Activated CD8-positive, alpha-beta T cell treated with anti-CD3 and anti-CD28 coated beads for 36 hours (primary cell): ENCODE measurements at regions of chr22 and their contacts with region 1.

Region 1: DNA sequence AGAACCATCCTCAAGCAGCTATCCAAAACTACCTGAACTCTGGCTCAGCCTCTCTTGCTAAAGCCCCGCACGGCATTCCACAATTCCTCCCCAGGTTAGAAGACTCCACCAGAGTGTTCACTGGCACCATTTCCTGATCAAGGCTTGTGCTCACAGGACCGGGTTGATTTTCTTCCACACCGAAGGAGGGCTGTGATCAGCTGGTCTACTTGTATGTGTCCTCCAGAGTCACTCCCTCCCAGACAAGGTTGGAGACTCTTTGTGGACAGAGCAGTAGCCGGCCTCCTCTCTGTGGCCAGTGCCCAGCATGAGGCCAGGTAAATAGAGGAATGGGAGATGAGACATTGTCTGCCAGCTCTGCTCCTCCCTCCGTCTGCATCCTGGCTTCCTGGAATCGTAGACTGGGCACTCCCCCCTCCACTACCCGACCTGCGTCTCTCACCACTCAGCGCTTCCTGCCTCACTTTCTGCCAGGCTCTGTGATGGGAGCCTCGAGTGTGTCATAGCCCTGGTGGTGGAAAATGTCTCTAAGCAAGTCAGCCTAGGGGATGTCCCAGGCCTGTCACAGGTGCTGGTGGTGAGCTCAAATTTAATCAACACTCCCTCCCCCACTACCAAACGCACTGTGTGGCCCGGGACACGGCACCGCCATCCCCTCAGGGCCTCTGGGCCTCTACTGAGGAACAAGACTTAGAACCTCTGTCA is 12.5 kb upstream of the TMPRSS6 start:
- DNase-seq: peak; percentile 97
- ATAC-seq: peak; percentile 93
- H3K4me3 Mint-ChIP-seq: peak overlapping the region; percentile 87
- H3K27ac Mint-ChIP-seq: peak overlapping the region; percentile 100
- H3K4me1 Mint-ChIP-seq: peaks cover 86% of the 10 kb centered on the region
- H3K27me3 Mint-ChIP-seq: no peaks in the 10 kb centered on the region
- CTCF ChIP-seq: no peak

Region 2: DNA sequence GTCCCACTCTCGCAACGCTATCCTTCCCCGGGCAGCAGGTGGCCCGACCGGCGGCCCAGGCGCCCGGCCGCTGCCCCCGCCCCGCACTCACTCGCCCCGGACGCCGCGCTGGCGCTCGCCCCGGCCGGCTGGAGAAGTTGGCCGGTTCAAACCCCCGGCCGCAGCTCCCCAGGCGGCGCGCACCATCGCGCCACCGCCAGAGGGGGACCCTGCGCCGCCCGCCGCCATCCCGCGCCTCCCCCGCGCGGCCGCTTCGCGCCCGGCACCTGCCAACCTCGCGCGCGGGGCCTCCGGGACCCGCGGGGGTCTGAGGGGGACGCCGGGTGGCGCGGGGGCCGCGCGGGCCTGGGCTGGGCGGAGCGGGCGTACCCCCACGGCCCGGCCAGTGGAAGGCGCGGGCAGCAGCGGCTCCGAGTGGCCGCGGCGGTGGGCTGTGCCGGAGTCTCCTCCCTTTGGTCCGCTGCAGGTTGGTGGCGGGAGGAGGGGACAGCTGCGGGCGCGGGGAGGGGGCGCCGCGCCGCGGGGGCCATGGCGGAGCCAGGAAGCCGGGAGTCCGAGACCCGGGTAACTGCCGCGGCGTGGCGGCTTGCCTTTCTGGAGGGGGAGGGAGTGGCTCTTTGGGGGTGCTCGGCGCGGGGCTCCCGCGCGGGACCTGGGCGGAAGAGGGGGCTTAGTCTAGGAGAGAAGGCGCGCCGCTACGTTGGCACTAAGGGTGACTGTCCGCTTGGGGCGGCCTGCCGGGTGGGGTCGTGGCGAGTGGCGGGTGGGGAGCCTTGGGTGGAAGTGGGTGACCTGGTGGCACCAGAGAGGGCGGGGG is 102.5 kb before region 1 on chr22 and contains the starts of genes MPST and TST:
- CTCF ChIA-PET with region 1: no interaction called
- POLR2A ChIA-PET with region 1: no interaction called
- intact Hi-C with region 1: no loop called
- DNase-seq: peak; percentile 31
- ATAC-seq: peak; percentile 73
- H3K4me3 Mint-ChIP-seq: peak within 1 kb of the TSS; percentile 81
- H3K27ac Mint-ChIP-seq: peak within 1 kb of the TSS; percentile 69
- H3K4me1 Mint-ChIP-seq: peaks cover 6% of the 10 kb centered on the region
- H3K27me3 Mint-ChIP-seq: peaks cover 21% of the 10 kb centered on the region
- CTCF ChIP-seq: peak; percentile 6
- total RNA-seq, gene MPST: 8.5 to 9.1 TPM
- total RNA-seq, gene TST: 1.2 to 1.8 TPM

Region 3: GRCh38 chr22:37077884-37078485 is 44.1 kb before region 1 on chr22:
- CTCF ChIA-PET with region 1: interaction called, 43 read pairs
- POLR2A ChIA-PET with region 1: interaction called, 70 read pairs
- intact Hi-C with region 1: loop called (anchors 5 kb)
- DNase-seq: peak; percentile 90
- ATAC-seq: no peak
- H3K4me3 Mint-ChIP-seq: peak overlapping the region; percentile 23
- H3K27ac Mint-ChIP-seq: peak overlapping the region; percentile 99
- H3K4me1 Mint-ChIP-seq: peaks cover 56% of the 10 kb centered on the region
- H3K27me3 Mint-ChIP-seq: peaks cover 16% of the 10 kb centered on the region
- CTCF ChIP-seq: peak; percentile 99

Region 4: GRCh38 chr22:37133304-37134018 is 11.4 kb after region 1 on chr22:
- CTCF ChIA-PET with region 1: interaction called, 11 read pairs
- POLR2A ChIA-PET with region 1: interaction called, 321 read pairs
- intact Hi-C with region 1: no loop called
- DNase-seq: no peak
- ATAC-seq: peak; percentile 21
- H3K4me3 Mint-ChIP-seq: no peak overlapping the region
- H3K27ac Mint-ChIP-seq: peak overlapping the region; percentile 27
- H3K4me1 Mint-ChIP-seq: peaks cover 34% of the 10 kb centered on the region
- H3K27me3 Mint-ChIP-seq: no peaks in the 10 kb centered on the region
- CTCF ChIP-seq: no peak

Region 5: GRCh38 chr22:37148742-37149665 is 27.0 kb after region 1 on chr22:
- CTCF ChIA-PET with region 1: interaction called, 63 read pairs
- POLR2A ChIA-PET with region 1: interaction called, 321 read pairs
- intact Hi-C with region 1: loop called (anchors 2 kb)
- DNase-seq: no peak
- ATAC-seq: no peak
- H3K4me3 Mint-ChIP-seq: peak overlapping the region; percentile 87
- H3K27ac Mint-ChIP-seq: peak overlapping the region; percentile 93
- H3K4me1 Mint-ChIP-seq: peaks cover 60% of the 10 kb centered on the region
- H3K27me3 Mint-ChIP-seq: no peaks in the 10 kb centered on the region
- CTCF ChIP-seq: no peak

Region 6: DNA sequence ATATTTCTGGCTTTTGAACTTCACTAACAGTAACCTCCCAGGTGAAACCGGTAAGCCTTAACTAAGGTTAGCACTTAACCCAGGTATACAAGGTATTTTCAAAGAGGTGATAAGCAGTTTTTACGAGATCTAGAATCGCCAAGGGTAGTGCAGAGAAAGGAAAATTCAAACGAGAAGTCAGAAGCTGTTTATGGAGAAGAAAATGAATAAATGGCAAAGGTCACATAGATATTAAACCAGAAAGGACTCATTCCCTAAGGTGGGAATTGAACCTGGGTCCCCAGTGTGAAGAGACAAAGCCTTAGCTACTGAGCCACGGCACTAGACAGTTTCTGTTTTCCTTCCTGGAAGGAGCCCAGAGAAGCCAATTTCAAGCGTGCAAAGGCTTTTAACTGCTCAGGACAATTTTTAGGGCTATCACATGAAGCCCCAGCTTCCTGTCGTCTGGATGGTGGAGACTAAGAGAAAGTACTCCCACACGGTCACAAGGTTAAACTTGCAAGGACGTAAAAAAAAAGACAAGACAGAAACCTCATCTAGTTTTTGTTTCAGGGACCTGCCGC is 71.7 kb after region 1 on chr22:
- CTCF ChIA-PET with region 1: interaction called, 60 read pairs
- POLR2A ChIA-PET with region 1: interaction called, 12 read pairs
- intact Hi-C with region 1: no loop called
- DNase-seq: peak; percentile 71
- ATAC-seq: peak; percentile 59
- H3K4me3 Mint-ChIP-seq: peak overlapping the region; percentile 40
- H3K27ac Mint-ChIP-seq: peak overlapping the region; percentile 83
- H3K4me1 Mint-ChIP-seq: peaks cover 70% of the 10 kb centered on the region
- H3K27me3 Mint-ChIP-seq: no peaks in the 10 kb centered on the region
- CTCF ChIP-seq: no peak